ENCODE measurements at regions of chr9 and their contacts with region 1.

Region 1: DNA sequence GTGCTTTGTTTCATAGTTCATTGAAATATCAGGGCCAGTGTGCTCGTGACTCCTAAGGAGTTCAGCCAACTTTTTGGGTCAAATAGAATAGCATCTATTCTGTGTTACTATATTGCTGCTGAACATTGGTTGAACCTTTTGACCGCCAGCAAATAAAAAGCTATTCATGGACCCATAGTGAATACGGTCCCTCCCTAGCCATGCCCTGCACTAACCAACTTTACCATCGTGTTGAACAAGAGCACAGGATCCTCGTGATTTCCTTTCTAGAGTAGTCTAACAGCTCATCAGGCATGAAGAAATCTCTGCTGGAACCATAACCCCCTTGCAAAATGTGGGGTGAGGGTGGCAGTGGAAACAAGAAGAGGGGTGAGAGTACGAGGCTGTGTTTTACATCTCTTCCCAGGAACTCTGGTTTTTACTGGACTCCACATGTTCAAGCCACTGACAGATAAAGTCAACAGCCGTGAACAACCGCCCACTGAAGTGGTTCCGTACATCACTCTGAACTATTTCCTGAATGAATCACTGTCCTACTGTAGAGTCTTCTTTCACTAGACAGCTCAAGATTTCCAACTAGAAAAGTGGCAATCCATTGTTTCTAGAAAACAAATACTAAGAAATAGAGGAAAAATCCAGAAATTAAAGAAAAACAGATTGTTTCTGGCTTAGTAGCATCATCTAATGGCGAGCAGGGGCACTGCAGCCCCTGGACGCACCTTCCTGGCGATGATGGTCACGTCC is 70.1 kb upstream of the SPATA31E1 start:
- DNase-seq: peak in 1 of 5 donors; percentile 5
- H3K4me3 ChIP-seq: no peak overlapping the region
- H3K4me3 Mint-ChIP-seq: peak overlapping the region in 6 of 8 donors; percentile 11 to 51 (median 36)
- H3K27ac ChIP-seq: no peak overlapping the region
- H3K27ac Mint-ChIP-seq: no peak overlapping the region
- H3K4me1 ChIP-seq: peaks cover 10% of the 10 kb centered on the region
- H3K4me1 Mint-ChIP-seq: peaks cover 0 to 15% (median under 1%) of the 10 kb centered on the region in 4 donors
- H3K27me3 ChIP-seq: no peaks in the 10 kb centered on the region
- H3K27me3 Mint-ChIP-seq: peaks cover 0 to 6% of the 10 kb centered on the region in 2 donors

Region 2: GRCh38 chr9:87678650-87679515 is 133.7 kb before region 1 on chr9:
- CTCF ChIA-PET with region 1: interaction called, 5 read pairs
- POLR2A ChIA-PET with region 1: no interaction called
- intact Hi-C with region 1: loop called (anchors 1 kb)
- DNase-seq: peak in 4 of 5 donors; percentile 19 to 32 (median 28)
- H3K4me3 ChIP-seq: no peak overlapping the region
- H3K4me3 Mint-ChIP-seq: no peak overlapping the region
- H3K27ac ChIP-seq: no peak overlapping the region
- H3K27ac Mint-ChIP-seq: peak overlapping the region in 1 of 7 donors; percentile 32
- H3K4me1 ChIP-seq: no peaks in the 10 kb centered on the region
- H3K4me1 Mint-ChIP-seq: peaks cover 2 to 5% (median 5%) of the 10 kb centered on the region in 4 donors
- H3K27me3 ChIP-seq: no peaks in the 10 kb centered on the region
- H3K27me3 Mint-ChIP-seq: no peaks in the 10 kb centered on the region